ENCODE measurements at regions of chr5 and their contacts with region 1.

Region 1: DNA sequence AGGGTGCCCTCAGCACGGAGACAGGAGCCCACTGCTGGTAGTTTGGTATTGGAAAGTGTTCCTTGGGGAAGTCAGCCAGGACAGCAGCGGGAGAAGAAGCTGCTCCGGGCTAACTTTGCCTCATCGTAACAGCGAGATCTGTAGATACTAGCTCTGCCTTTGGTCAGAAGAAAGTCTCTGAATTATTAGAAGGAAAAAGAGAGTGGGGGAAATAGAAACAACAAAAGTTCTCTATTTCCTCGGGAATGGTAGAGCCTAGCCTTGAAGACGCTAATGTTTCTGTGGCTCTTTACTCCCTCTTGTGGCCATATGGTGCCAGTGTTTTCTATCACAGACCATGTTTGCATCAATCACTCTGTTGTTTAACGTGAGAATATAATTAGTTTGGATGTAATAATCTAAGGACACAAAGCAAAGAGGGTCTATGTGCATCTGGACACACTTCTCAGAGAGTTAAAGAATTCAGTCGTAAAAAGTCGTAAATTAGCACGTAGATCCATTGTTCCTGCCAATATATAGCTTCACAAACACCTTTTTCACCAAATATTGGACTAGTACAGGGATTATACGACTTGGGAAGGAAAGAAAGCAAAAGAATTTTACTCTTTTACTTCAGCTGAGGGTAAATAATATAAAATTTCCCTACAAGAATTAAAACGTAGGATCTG is 40.2 kb upstream of the HSD17B4 start:
- DNase-seq: peak in 32 of 35 experiments; percentile 12 to 87 (median 40)
- ATAC-seq: peak; percentile 81 to 90 (median 84)
- H3K4me3 ChIP-seq: peak overlapping the region; percentile 48 to 88
- H3K4me3 Mint-ChIP-seq: peak overlapping the region; percentile 79 to 85 (median 84)
- H3K27ac ChIP-seq: no peak overlapping the region
- H3K27ac Mint-ChIP-seq: peak overlapping the region; percentile 75 to 80
- H3K4me1 ChIP-seq: peaks cover 7 to 8% of the 10 kb centered on the region in 2 experiments
- H3K4me1 Mint-ChIP-seq: peaks cover 14 to 23% (median 20%) of the 10 kb centered on the region in 3 donors
- H3K27me3 ChIP-seq: peaks cover 0 to 2% of the 10 kb centered on the region in 2 experiments
- H3K27me3 Mint-ChIP-seq: no peaks in the 10 kb centered on the region

Region 2: DNA sequence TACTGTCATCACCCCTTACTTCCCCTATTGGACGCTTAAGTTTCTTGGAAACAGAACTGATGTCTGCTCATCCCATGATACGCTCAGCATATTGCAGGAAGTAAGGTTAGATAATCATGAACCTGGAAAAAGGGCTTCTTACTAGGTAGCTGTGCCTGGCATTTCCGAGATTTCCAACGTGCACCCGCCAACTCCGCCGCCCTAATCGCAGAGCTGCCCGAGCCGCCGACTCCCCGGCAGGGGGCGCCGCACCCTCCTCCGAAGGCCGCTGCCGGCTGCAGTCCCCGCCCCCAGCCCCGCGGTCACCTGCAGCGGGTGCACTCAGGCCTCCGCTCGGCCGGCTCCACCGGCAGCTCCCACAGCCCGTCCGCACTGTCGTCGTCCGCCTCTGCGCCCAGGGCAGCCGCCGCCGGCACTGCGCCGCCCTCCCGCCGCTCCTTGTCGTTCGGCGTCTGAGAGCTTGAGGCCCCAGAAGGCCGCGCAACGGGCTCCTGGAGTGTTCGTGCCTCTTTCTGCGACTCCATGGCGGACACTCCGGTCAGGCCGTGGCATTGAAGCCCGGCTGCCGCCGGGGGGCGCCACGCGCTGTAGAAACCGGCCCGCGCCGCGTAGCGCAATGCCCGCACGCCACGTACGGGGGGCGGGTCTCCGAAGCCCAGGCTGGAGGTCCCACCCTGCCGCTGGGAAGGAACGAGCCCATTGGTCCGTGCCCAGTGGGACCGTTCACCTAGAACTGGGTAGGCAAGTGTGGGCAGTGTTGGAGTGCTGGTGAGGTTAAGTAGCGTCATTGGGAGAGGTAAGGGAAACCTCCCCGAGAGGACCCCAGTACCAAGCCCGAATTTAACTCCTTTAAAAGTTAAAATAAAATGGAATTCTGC is 423.8 kb before region 1 on chr5 and contains the start of gene DTWD2:
- CTCF ChIA-PET with region 1: interaction called, 21 to 41 read pairs
- POLR2A ChIA-PET with region 1: interaction called, 3 to 8 read pairs
- DNase-seq: peak; percentile 81 to 95 (median 88)
- ATAC-seq: peak; percentile 88 to 95 (median 93)
- H3K4me3 ChIP-seq: peak within 1 kb of the TSS; percentile 39 to 62
- H3K4me3 Mint-ChIP-seq: peak within 1 kb of the TSS; percentile 74 to 79 (median 77)
- H3K27ac ChIP-seq: peak within 1 kb of the TSS; percentile 55
- H3K27ac Mint-ChIP-seq: peak within 1 kb of the TSS; percentile 66 to 72
- H3K4me1 ChIP-seq: peaks cover 4 to 8% of the 10 kb centered on the region in 2 experiments
- H3K4me1 Mint-ChIP-seq: peaks cover 24 to 35% (median 24%) of the 10 kb centered on the region in 3 donors
- H3K27me3 ChIP-seq: no peaks in the 10 kb centered on the region
- H3K27me3 Mint-ChIP-seq: no peaks in the 10 kb centered on the region
- total RNA-seq, gene DTWD2: 3.0 to 4.4 (median 3.2) TPM

Region 3: DNA sequence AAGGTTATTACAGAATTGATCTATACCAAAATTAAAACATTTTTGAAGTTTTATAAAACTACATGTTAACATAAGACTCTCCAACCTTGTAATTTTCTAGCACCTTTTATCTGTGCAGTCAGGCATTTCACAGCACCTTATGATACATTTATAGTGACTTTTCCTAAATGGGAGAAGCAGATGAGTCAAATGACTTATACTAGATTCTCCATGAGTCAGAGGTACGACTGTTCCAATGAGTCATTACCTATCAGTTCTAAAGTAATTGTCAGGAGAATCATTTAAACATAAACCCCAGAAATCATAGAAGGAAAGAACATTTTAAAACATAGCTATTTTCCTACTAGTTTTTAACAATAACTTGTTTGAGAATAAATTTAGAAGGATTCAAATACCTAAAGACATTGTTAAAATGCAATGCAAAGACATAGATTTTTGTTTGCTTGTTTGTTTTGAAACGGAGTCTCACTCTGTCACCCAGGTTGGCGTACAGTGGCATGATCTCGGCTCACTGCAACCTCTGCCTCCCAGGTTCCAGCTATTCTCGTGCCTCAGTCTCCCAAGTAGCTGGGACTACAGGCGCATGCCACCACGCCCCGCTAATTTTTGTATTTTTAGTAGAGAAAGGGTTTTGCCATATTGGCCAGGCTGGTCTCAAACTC is 375.8 kb before region 1 on chr5:
- CTCF ChIA-PET with region 1: interaction called in 1 of 2 experiments, 3 read pairs
- POLR2A ChIA-PET with region 1: interaction called in 1 of 2 experiments, 10 read pairs
- DNase-seq: no peak
- ATAC-seq: no peak
- H3K4me3 ChIP-seq: no peak overlapping the region
- H3K4me3 Mint-ChIP-seq: no peak overlapping the region
- H3K27ac ChIP-seq: no peak overlapping the region
- H3K27ac Mint-ChIP-seq: no peak overlapping the region
- H3K4me1 ChIP-seq: peaks cover 3 to 4% of the 10 kb centered on the region in 2 experiments
- H3K4me1 Mint-ChIP-seq: peaks cover 15 to 17% (median 15%) of the 10 kb centered on the region in 3 donors
- H3K27me3 ChIP-seq: no peaks in the 10 kb centered on the region
- H3K27me3 Mint-ChIP-seq: no peaks in the 10 kb centered on the region

Region 4: GRCh38 chr5:119274767-119275130 is 137.3 kb before region 1 on chr5:
- CTCF ChIA-PET with region 1: interaction called, 5 to 12 read pairs
- POLR2A ChIA-PET with region 1: interaction called in 1 of 2 experiments, 3 read pairs
- DNase-seq: peak in 1 of 35 experiments; percentile 67
- ATAC-seq: peak; percentile 29 to 56 (median 52)
- H3K4me3 ChIP-seq: no peak overlapping the region
- H3K4me3 Mint-ChIP-seq: peak overlapping the region; percentile 64 to 100 (median 98)
- H3K27ac ChIP-seq: peak overlapping the region; percentile 82
- H3K27ac Mint-ChIP-seq: peak overlapping the region; percentile 97 to 99
- H3K4me1 ChIP-seq: peaks cover 80 to 83% of the 10 kb centered on the region in 2 experiments
- H3K4me1 Mint-ChIP-seq: peaks cover 90 to 98% (median 98%) of the 10 kb centered on the region in 3 donors
- H3K27me3 ChIP-seq: no peaks in the 10 kb centered on the region
- H3K27me3 Mint-ChIP-seq: peaks cover 0 to 2% of the 10 kb centered on the region in 2 donors

Region 5: GRCh38 chr5:119367502-119368237 is 44.4 kb before region 1 on chr5:
- CTCF ChIA-PET with region 1: interaction called in 1 of 2 experiments, 15 read pairs
- POLR2A ChIA-PET with region 1: no interaction called
- DNase-seq: peak in 1 of 35 experiments; percentile 54
- ATAC-seq: peak in 3 of 4 experiments; percentile 25 to 71 (median 35)
- H3K4me3 ChIP-seq: peak overlapping the region in 1 of 2 donors; percentile 19
- H3K4me3 Mint-ChIP-seq: peak overlapping the region; percentile 41 to 63 (median 63)
- H3K27ac ChIP-seq: peak overlapping the region; percentile 55
- H3K27ac Mint-ChIP-seq: peak overlapping the region; percentile 85 to 91
- H3K4me1 ChIP-seq: peaks cover 44 to 50% of the 10 kb centered on the region in 2 experiments
- H3K4me1 Mint-ChIP-seq: peaks cover 75 to 87% (median 84%) of the 10 kb centered on the region in 3 donors
- H3K27me3 ChIP-seq: no peaks in the 10 kb centered on the region
- H3K27me3 Mint-ChIP-seq: no peaks in the 10 kb centered on the region